ENCODE measurements at regions of chr7 and their contacts with region 1.

Region 1: DNA sequence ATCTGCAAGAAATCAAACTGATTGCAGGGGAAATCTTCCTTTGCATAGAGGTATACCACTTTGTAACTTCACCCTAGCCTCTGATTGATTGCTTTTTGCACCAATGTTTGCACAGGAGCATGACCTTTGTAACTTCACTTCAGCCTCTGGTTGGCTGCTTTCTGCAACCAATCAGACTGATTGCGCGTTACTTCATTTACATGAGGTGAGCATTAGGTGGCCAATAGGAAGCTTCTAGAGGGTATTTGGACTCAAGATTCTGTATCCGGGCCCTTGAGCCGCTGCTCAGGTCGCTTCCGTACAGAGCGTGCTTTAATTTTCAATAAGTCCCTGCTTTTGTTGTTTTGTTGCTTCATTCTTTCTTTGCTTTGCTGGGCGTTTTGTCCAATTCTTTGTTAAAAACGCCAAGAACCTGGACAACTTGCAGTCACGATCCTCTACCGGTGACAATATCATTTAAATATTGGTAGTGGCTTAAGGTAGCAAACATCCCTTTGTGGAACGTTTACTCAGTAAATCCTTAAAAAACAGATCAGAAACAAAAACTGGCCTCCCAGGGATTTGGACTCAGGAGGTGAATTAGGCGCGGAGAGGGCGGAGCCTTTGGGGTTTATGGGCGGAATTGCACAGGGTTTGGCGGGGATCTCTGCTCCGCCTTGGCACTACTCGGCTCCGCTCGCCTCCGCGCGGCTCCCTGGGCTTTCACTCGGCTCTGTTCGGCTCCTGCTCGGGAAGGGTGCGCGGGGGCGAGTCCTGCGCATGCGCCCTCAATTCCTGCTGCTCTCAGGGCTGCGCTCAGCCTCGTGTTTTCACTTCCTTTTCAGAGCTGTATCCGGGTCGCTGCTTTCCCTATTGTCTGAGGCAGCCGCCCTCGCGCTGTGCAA is at the start of gene PHF14:
- DNase-seq: peak; percentile 93 to 99 (median 97)

Region 2: GRCh38 chr7:10939911-10940703 is 33.2 kb before region 1 on chr7:
- intact Hi-C with region 1: loop called (anchors 2 kb)
- DNase-seq: peak; percentile 75 to 95 (median 88)

Measured in head of caudate nucleus (tissue), 42 donors.